MCF 10A (cell line): ENCODE measurements at regions of chr1 and their contacts with region 1.

Region 1: GRCh38 chr1:200392625-200393185 is 17.1 kb downstream of the ZNF281 start:
- DNase-seq: no peak
- H3K4me3 Mint-ChIP-seq: no peak overlapping the region
- H3K27ac Mint-ChIP-seq: no peak overlapping the region
- H3K4me1 Mint-ChIP-seq: no peaks in the 10 kb centered on the region
- H3K27me3 Mint-ChIP-seq: no peaks in the 10 kb centered on the region
- CTCF ChIP-seq: no peak

Region 2: GRCh38 chr1:200409761-200410565 is 17.3 kb after region 1 on chr1 and contains the start of gene ZNF281:
- CTCF ChIA-PET with region 1: interaction called, 5 read pairs
- POLR2A ChIA-PET with region 1: interaction called, 15 read pairs
- intact Hi-C with region 1: no loop called
- DNase-seq: peak; percentile 97
- H3K4me3 Mint-ChIP-seq: peak within 1 kb of the TSS; percentile 94
- H3K27ac Mint-ChIP-seq: peak within 1 kb of the TSS; percentile 93
- H3K4me1 Mint-ChIP-seq: peaks cover 60% of the 10 kb centered on the region
- H3K27me3 Mint-ChIP-seq: no peaks in the 10 kb centered on the region
- CTCF ChIP-seq: no peak
- total RNA-seq, gene ZNF281: 22.3 and 24.8 TPM in 2 replicates

Region 3: DNA sequence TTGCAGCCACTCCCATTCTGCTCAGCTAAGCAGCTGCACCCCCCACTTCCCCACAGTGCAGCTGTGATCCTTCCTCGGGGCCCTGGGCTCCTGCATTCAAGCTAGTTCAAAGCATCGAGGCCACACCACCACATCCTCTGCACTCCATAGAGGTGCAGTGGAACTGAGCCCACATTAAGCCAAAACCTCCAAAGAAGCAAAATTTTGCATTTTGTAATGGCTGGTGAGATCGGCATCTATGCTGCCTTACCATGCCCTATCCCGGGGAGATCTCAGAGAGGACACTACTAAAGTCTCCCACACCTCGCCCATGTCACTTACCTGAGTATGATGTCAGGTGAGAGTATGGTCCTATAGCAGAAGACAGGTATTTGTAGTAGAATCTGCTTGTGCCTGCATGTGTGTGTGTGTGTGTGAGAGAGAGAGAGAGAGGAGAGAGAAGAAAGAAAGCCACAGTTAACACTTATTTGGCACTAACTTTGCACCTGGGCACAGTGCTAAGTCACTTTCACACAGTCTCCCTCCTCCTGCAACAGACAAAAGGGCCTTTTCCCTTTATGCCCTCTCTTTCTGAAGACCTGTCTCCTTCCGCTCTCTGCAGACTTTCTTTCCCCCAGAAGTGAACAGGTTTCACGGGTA is 138.0 kb after region 1 on chr1:
- CTCF ChIA-PET with region 1: no interaction called
- POLR2A ChIA-PET with region 1: no interaction called
- intact Hi-C with region 1: no loop called
- DNase-seq: no peak
- H3K4me3 Mint-ChIP-seq: no peak overlapping the region
- H3K27ac Mint-ChIP-seq: no peak overlapping the region
- H3K4me1 Mint-ChIP-seq: no peaks in the 10 kb centered on the region
- H3K27me3 Mint-ChIP-seq: no peaks in the 10 kb centered on the region
- CTCF ChIP-seq: no peak